IMR-90 (cell line): ENCODE measurements at regions of chr18 and their contacts with region 1.

Region 1: GRCh38 chr18:24868760-24869237 is 408.4 kb downstream of the HRH4 start:
- DNase-seq: peak; percentile 85
- ATAC-seq: peak; percentile 93
- H3K4me3 ChIP-seq: no peak overlapping the region
- H3K27ac ChIP-seq: peak overlapping the region; percentile 44; the same call in 1 of the 2 replicates
- H3K4me1 ChIP-seq: peaks cover 5% of the 10 kb centered on the region
- H3K27me3 ChIP-seq: no peaks in the 10 kb centered on the region
- CTCF ChIP-seq: no peak
- POLR2A ChIP-seq: no peak
- RAD21 ChIP-seq: no peak

Region 2: GRCh38 chr18:24600076-24600654 is 268.6 kb before region 1 on chr18:
- CTCF ChIA-PET with region 1: no interaction called
- POLR2A ChIA-PET with region 1: no interaction called
- dilution Hi-C with region 1: no loop called
- in situ Hi-C with region 1: no loop called
- intact Hi-C with region 1: loop called (anchors 2 kb)
- DNase-seq: peak; percentile 75
- ATAC-seq: peak; percentile 79
- H3K4me3 ChIP-seq: no peak overlapping the region
- H3K27ac ChIP-seq: no peak overlapping the region
- H3K4me1 ChIP-seq: peaks cover 2% of the 10 kb centered on the region; the same call in 1 of the 2 replicates
- H3K27me3 ChIP-seq: peaks cover 24% of the 10 kb centered on the region
- CTCF ChIP-seq: peak; percentile 83
- POLR2A ChIP-seq: no peak
- RAD21 ChIP-seq: peak; percentile 83

Region 3: GRCh38 chr18:24763765-24764513 is 104.9 kb before region 1 on chr18:
- CTCF ChIA-PET with region 1: no interaction called
- POLR2A ChIA-PET with region 1: no interaction called
- dilution Hi-C with region 1: no loop called
- in situ Hi-C with region 1: no loop called
- intact Hi-C with region 1: loop called (anchors 10 kb)
- DNase-seq: peak; percentile 96
- ATAC-seq: peak; percentile 80
- H3K4me3 ChIP-seq: no peak overlapping the region
- H3K27ac ChIP-seq: peak overlapping the region; percentile 82
- H3K4me1 ChIP-seq: peaks cover 20% of the 10 kb centered on the region
- H3K27me3 ChIP-seq: no peaks in the 10 kb centered on the region
- CTCF ChIP-seq: no peak
- POLR2A ChIP-seq: no peak
- RAD21 ChIP-seq: no peak

Region 4: GRCh38 chr18:24791751-24792560 is 76.8 kb before region 1 on chr18:
- CTCF ChIA-PET with region 1: no interaction called
- POLR2A ChIA-PET with region 1: no interaction called
- dilution Hi-C with region 1: no loop called
- in situ Hi-C with region 1: no loop called
- intact Hi-C with region 1: loop called (anchors 5 kb)
- DNase-seq: peak; percentile 48
- ATAC-seq: peak; percentile 94
- H3K4me3 ChIP-seq: no peak overlapping the region
- H3K27ac ChIP-seq: peak overlapping the region; percentile 4; the same call in 1 of the 2 replicates
- H3K4me1 ChIP-seq: peaks cover 7% of the 10 kb centered on the region
- H3K27me3 ChIP-seq: no peaks in the 10 kb centered on the region
- CTCF ChIP-seq: no peak
- POLR2A ChIP-seq: no peak
- RAD21 ChIP-seq: no peak